ENCODE measurements at regions of chr17 and their contacts with region 1.

Region 1: DNA sequence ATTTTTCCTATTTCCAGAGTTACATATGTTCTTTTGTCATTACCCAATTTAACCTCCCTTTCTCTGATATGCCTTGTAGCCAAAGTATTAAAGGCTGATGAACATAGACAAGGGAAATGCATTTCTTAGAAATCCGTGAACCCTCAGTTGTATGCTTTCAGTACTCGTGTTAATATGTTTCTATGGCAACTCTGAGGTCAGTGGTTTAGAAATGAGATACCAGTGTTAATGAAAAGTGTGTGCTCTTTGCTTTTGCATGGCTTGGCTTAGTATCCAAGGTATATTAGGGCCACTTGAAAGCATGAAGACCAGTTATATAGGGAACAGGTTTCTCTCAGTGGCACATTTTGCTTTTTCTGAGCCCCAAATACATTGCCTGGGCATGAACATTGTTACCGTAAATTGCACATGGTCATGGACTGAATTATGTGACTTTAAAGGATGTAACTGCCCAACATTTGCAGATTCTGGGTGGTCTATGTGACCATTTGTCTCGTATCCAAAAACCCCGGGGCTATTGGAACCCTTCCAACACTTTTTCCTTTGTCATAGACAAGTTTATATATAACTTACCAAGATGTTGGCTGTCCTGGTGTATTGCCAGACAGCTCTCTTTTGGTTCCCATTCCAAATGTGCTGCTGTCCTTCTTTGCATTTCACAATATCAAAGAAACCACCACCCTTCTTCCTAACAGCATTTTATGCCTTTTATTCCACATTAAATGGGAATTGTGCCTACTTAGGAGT is 17.5 kb downstream of the ABHD15 start:
- DNase-seq: no peak
- ATAC-seq: peak; percentile 36
- H3K4me3 Mint-ChIP-seq: no peak overlapping the region
- H3K27ac Mint-ChIP-seq: no peak overlapping the region
- H3K4me1 Mint-ChIP-seq: no peaks in the 10 kb centered on the region
- H3K27me3 Mint-ChIP-seq: no peaks in the 10 kb centered on the region

Region 2: GRCh38 chr17:29533976-29534375 is 15.4 kb before region 1 on chr17:
- CTCF ChIA-PET with region 1: interaction called, 10 read pairs
- POLR2A ChIA-PET with region 1: interaction called, 5 read pairs
- intact Hi-C with region 1: no loop called
- DNase-seq: no peak
- ATAC-seq: no peak
- H3K4me3 Mint-ChIP-seq: no peak overlapping the region
- H3K27ac Mint-ChIP-seq: no peak overlapping the region
- H3K4me1 Mint-ChIP-seq: no peaks in the 10 kb centered on the region
- H3K27me3 Mint-ChIP-seq: no peaks in the 10 kb centered on the region

Region 3: GRCh38 chr17:29589524-29590410 is 40.4 kb after region 1 on chr17 and contains the start of gene GIT1:
- CTCF ChIA-PET with region 1: no interaction called
- POLR2A ChIA-PET with region 1: no interaction called
- intact Hi-C with region 1: no loop called
- DNase-seq: peak; percentile 92
- ATAC-seq: peak; percentile 69
- H3K4me3 Mint-ChIP-seq: peak within 1 kb of the TSS; percentile 94
- H3K27ac Mint-ChIP-seq: peak within 1 kb of the TSS; percentile 92
- H3K4me1 Mint-ChIP-seq: peaks cover 64% of the 10 kb centered on the region
- H3K27me3 Mint-ChIP-seq: no peaks in the 10 kb centered on the region
- total RNA-seq, gene GIT1: 60.5 to 74.1 TPM

Measured in activated CD4-positive, alpha-beta T cell treated with anti-CD3 and anti-CD28 coated beads for 36 hours (primary cell).